Tibial artery (tissue), 4 donors: ENCODE measurements at regions of chr6 and their contacts with region 1.

Region 1: GRCh38 chr6:119109654-119110325 is 31.3 kb upstream of the FAM184A start:
- DNase-seq: no peak
- H3K4me3 ChIP-seq: no peak overlapping the region
- H3K27ac ChIP-seq: no peak overlapping the region
- H3K4me1 ChIP-seq: peaks cover 0 to 3% (median 0%) of the 10 kb centered on the region in 4 donors
- H3K27me3 ChIP-seq: no peaks in the 10 kb centered on the region
- CTCF ChIP-seq: no peak

Region 2: DNA sequence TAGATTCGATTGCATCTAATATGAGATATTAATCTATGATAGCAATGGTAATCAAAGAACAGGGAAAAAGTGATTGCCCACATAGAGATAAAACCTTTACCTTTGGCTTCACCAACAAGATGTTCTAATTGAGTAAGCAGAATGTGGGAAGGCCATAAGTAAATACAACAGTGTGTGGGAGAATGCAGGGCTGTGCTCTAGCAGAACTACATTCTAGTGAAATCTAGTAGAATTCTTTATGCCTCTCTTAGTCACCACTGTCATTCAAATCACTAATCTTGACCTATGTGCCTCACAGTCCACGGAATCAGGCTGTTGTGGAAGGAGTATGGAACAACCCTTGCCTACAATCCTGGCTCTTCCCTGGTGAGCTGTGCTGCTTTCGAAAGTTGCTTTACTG is 144.4 kb before region 1 on chr6:
- intact Hi-C with region 1: loop called (anchors 2 kb)
- DNase-seq: no peak
- H3K4me3 ChIP-seq: no peak overlapping the region
- H3K27ac ChIP-seq: no peak overlapping the region
- H3K4me1 ChIP-seq: no peaks in the 10 kb centered on the region
- H3K27me3 ChIP-seq: no peaks in the 10 kb centered on the region
- CTCF ChIP-seq: no peak

Region 3: DNA sequence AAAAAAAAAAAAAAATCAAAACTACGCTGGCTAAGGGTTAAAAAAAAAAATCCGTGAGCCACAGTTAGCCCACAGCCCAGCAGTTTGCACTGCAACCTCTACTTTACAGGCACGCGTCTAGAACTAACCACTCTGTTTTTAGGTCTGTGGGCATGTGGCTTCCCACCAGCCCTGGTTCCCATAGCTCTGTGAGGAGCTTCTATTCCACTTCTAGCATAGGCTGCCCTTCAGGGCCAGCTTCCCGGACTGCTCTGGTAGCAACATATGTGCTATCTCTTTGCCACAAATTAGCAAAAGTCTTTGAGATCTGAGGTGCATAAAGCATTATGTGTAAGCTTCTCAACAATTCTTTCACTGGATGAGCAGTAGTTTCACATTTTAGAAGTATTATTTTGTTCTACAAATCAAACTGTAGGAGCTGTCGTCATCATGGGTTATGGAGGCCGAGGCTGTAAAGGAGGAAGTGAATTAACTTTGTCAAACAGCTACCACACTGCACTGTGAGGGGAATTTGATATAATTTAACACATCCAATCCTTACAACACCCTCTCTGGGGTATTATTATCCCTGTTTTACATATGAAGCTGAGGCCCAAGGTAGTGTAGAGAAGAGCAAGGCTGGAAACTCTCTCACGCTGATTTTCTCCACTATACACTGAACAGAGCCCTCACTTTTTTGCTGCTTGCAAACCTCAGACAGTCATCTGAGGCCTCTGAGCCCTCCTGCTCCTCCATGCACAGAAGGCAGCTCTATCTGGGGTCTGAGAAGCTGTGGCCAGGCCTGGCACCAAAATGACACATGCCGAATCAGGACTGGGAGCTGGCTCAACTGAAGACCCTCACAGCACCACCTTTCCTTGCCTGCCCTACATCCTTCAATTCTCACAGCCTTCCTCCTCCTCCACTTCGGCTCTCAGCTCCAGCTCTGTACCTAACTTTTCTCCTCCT is 204.4 kb after region 1 on chr6:
- intact Hi-C with region 1: no loop called
- DNase-seq: no peak
- H3K4me3 ChIP-seq: no peak overlapping the region
- H3K27ac ChIP-seq: no peak overlapping the region
- H3K4me1 ChIP-seq: peaks cover 0 to 25% (median 10%) of the 10 kb centered on the region in 4 donors
- H3K27me3 ChIP-seq: no peaks in the 10 kb centered on the region
- CTCF ChIP-seq: no peak